ENCODE measurements at regions of chr10 and their contacts with region 1.

Region 1: DNA sequence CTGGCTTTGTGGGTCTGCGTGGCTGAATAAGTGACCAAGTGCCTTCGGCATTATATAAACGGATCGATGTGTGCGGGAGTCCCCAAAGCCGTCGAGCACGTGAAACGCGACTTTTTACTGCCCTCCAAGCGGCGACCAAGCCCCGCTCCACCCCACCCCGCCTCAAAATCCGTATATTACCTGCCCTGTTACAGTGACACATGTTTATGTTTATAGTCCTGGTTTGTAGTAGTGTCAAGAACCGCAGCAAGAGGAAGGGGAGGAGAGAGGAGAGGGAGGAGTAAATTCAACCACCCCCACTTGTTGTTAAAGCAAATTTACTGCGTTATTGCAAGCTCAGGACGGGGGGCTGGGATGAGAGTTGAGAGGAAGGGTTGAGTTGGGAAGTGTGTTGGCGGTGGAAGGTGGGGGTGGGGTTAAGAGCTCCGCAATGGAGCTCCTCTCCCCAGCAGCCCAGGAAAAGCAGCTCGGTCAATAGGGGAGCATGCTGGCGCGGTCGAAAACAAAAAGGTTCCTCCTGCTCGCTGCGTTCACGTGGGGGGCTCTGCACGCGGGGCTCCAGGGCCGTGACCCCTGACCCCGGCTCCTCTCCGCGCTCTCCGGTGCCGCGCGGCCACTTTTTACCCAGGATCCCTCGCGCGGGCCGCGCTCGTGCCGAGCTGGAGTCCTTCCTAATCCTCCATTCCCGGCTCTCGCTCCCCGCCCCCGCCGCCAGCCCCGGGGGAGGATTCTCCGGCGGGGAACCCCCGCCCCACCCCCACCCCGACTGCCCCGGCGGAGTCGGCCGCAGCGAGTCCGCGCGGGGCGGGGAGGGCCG is at the start of gene SKIDA1:
- DNase-seq: peak in 13 of 14 experiments; percentile 33 to 83 (median 50)
- ATAC-seq: peak; percentile 79
- H3K4me3 ChIP-seq: peak within 1 kb of the TSS; percentile 80
- H3K4me3 Mint-ChIP-seq: peak within 1 kb of the TSS; percentile 98
- H3K27ac ChIP-seq: peak within 1 kb of the TSS; percentile 61 to 66
- H3K27ac Mint-ChIP-seq: peak within 1 kb of the TSS; percentile 86
- H3K4me1 ChIP-seq: peaks cover 25% of the 10 kb centered on the region
- H3K4me1 Mint-ChIP-seq: peaks cover 37% of the 10 kb centered on the region
- H3K27me3 ChIP-seq: peaks cover 5 to 26% of the 10 kb centered on the region in 2 experiments
- H3K27me3 Mint-ChIP-seq: peaks cover 36% of the 10 kb centered on the region
- CTCF ChIP-seq: no peak
- total RNA-seq, gene SKIDA1: 0.22 to 0.25 TPM

Region 2: DNA sequence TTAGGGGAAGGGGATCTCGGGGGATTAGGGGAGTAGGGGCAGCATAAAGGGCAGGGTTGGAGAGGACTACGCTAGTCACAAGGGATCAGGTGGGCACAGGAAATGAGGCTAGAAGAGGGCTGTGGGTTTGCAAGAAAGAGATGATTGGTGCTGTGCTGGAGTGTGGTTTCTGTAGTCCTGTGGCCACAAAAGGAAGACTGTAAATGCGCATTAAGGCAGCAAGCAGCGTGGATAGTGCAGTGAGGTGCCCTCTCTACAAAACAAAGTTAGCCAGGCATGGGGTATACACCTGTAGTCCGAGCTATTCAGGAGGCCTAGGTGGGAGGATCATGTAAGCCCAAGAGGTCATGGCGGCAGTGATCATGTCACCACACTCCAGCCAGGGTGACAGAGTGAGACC is 220.5 kb after region 1 on chr10:
- CTCF ChIA-PET with region 1: interaction called, 4 read pairs
- POLR2A ChIA-PET with region 1: no interaction called
- intact Hi-C with region 1: loop called in 1 of 2 experiments (anchors 10 kb)
- DNase-seq: peak in 5 of 14 experiments; percentile 25 to 52 (median 39)
- ATAC-seq: peak; percentile 73
- H3K4me3 ChIP-seq: no peak overlapping the region
- H3K4me3 Mint-ChIP-seq: peak overlapping the region; percentile 0
- H3K27ac ChIP-seq: peak overlapping the region; percentile 24 to 32
- H3K27ac Mint-ChIP-seq: peak overlapping the region; percentile 78
- H3K4me1 ChIP-seq: peaks cover 21% of the 10 kb centered on the region
- H3K4me1 Mint-ChIP-seq: peaks cover 37% of the 10 kb centered on the region
- H3K27me3 ChIP-seq: no peaks in the 10 kb centered on the region
- H3K27me3 Mint-ChIP-seq: no peaks in the 10 kb centered on the region
- CTCF ChIP-seq: no peak

Region 3: DNA sequence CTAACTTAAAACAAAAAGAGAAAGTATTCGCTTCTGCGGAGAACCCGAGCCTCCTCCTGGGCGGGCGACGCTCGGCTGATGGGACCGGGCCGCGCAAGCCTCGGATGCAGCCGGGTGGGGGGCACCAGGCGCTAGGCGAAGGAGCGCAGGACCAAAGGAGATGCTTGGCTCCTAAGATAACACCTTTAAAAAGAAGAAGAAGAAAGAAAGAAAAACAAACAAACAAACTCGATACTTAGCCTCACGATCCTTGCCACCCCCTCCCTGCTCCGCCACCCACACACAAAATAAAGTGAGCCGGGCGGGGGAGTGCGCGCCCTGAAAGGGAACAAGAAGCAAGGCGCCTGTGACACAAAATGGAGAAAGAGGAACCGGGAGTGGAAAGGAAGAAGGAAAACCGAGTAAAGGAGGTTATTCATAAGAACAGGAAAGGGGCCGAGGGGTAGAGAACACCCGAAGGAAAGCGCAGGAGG is 726.2 kb after region 1 on chr10:
- CTCF ChIA-PET with region 1: no interaction called
- POLR2A ChIA-PET with region 1: interaction called, 3 read pairs
- intact Hi-C with region 1: loop called in 1 of 2 experiments (anchors 10 kb)
- DNase-seq: peak; percentile 46 to 82 (median 66)
- ATAC-seq: peak; percentile 57
- H3K4me3 ChIP-seq: peak overlapping the region; percentile 76
- H3K4me3 Mint-ChIP-seq: peak overlapping the region; percentile 96
- H3K27ac ChIP-seq: peak overlapping the region; percentile 71 to 76
- H3K27ac Mint-ChIP-seq: peak overlapping the region; percentile 97
- H3K4me1 ChIP-seq: peaks cover 10% of the 10 kb centered on the region
- H3K4me1 Mint-ChIP-seq: peaks cover 56% of the 10 kb centered on the region
- H3K27me3 ChIP-seq: peaks cover 0 to 7% of the 10 kb centered on the region in 2 experiments
- H3K27me3 Mint-ChIP-seq: peaks cover 22% of the 10 kb centered on the region
- CTCF ChIP-seq: no peak

Measured in CD4-positive, alpha-beta T cell (primary cell).